Activated CD8-positive, alpha-beta T cell treated with anti-CD3 and anti-CD28 coated beads for 36 hours (primary cell): ENCODE measurements at regions of chr15 and their contacts with region 1.

Region 1: DNA sequence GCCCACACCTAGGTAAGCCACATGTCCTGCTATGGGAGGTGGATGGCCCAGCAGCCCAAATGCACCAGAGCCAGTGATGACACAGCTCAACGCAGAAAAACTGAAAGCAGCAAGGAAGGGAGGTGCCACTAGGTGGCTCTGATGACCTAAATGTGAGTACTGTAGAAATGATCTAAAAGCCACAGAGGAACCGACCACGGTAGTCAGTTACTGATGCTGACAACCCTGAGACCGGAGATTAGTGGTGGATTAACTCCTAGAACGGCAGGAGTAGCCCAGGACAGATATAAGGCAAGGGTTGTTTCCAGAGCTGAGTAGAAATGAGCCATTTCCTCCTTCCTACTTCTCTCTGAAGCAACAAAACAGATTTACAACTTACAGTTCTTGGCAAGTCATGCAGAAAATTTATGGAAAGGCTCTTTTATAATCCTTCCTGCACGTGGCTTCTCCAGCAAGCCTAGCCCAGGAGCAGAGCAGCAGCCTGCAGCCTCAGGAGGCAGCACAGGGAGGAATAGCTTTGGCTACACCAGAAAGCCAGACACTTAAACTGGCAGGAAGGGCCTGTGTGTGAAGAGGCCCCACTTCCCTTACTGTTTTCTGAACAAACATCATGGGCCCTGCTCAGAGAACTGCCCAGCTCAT is 13.1 kb downstream of the FBXL22 start:
- DNase-seq: peak; percentile 93
- ATAC-seq: peak; percentile 87
- H3K4me3 Mint-ChIP-seq: no peak overlapping the region
- H3K27ac Mint-ChIP-seq: peak overlapping the region; percentile 91
- H3K4me1 Mint-ChIP-seq: peaks cover 32% of the 10 kb centered on the region
- H3K27me3 Mint-ChIP-seq: no peaks in the 10 kb centered on the region
- CTCF ChIP-seq: peak; percentile 81

Region 2: DNA sequence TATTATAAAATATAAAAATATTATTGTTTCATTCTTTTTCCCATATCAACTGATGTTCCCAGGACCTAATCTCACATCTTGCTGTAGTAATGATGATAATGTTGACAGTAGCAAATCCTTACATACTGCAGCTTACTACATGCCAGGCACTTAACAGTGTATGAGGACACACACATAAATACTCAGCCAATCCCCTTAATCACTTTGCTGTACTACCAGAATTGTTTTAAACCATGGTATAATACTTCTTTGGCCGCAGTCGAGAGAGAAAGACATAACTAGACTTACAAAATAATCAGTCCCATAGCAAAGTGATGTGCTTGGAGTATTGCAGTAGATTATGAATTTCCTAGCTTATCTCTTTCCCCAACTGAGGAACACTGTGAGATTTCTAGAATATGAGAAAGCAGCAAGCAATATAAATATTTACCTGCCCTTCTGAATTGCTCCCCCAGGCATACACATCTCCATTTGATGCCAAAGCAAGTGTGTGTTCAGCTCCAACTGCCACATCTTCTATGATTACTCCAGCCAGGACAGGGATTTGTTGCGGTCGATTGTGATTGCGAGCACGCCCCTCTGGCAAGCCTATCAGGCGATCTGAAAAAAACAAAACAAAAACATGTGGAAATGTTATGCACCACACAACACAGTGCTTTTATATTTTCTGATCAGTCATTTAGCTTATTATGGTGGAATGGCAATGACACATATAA is 19.9 kb after region 1 on chr15:
- CTCF ChIA-PET with region 1: interaction called, 18 read pairs
- POLR2A ChIA-PET with region 1: interaction called, 4 read pairs
- intact Hi-C with region 1: no loop called
- DNase-seq: no peak
- ATAC-seq: no peak
- H3K4me3 Mint-ChIP-seq: no peak overlapping the region
- H3K27ac Mint-ChIP-seq: peak overlapping the region; percentile 57
- H3K4me1 Mint-ChIP-seq: peaks cover 12% of the 10 kb centered on the region
- H3K27me3 Mint-ChIP-seq: no peaks in the 10 kb centered on the region
- CTCF ChIP-seq: no peak

Region 3: DNA sequence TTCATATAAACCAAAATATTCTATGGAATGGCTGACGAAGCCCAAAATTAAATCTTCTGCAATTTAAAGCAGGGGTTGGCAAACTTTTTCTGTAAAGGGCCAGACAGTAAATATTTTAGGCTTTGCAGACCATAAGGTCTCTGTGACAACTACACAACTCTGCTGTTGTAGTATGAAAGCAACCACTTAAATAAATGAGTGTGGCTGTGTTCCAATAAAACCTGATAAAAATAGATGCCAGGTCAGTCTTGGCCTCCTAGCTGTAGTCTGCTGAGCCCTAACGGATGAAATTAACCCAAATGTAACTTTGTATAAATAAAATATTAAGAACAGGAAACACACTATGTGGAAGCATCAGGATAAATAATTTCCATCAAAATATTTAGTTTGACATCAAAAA is 91.0 kb after region 1 on chr15:
- CTCF ChIA-PET with region 1: interaction called, 11 read pairs
- POLR2A ChIA-PET with region 1: no interaction called
- intact Hi-C with region 1: no loop called
- DNase-seq: no peak
- ATAC-seq: no peak
- H3K4me3 Mint-ChIP-seq: no peak overlapping the region
- H3K27ac Mint-ChIP-seq: no peak overlapping the region
- H3K4me1 Mint-ChIP-seq: peaks cover 5% of the 10 kb centered on the region
- H3K27me3 Mint-ChIP-seq: no peaks in the 10 kb centered on the region
- CTCF ChIP-seq: no peak

Region 4: GRCh38 chr15:63942486-63943365 is 332.4 kb after region 1 on chr15:
- CTCF ChIA-PET with region 1: no interaction called
- POLR2A ChIA-PET with region 1: no interaction called
- intact Hi-C with region 1: no loop called
- DNase-seq: no peak
- ATAC-seq: no peak
- H3K4me3 Mint-ChIP-seq: no peak overlapping the region
- H3K27ac Mint-ChIP-seq: no peak overlapping the region
- H3K4me1 Mint-ChIP-seq: peaks cover 33% of the 10 kb centered on the region
- H3K27me3 Mint-ChIP-seq: no peaks in the 10 kb centered on the region
- CTCF ChIP-seq: no peak

Region 5: DNA sequence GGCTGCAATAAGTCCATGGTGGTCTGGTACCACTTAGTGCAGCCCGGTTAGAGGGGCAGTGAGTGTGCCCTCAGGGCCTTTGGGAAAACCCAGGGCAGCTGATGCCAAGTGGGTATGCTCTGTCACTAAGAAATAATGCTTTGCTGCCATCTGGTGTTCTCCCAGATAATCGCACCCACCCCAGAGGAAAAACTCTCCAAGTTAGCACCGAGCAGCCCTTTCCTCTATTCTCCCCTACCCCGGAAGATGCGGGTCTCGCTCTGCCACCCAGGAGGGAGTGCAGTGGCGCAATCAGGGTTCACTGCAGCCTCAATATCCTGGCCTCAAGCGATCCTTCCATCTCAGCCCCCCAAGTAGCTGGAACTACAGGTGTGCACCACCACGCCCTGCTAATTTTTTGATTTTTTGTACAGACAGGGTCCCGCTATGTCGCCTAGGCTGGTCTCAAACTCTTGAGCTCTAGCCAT is 457.3 kb after region 1 on chr15:
- CTCF ChIA-PET with region 1: interaction called, 66 read pairs
- POLR2A ChIA-PET with region 1: no interaction called
- intact Hi-C with region 1: loop called (anchors 10 kb)
- DNase-seq: peak; percentile 80
- ATAC-seq: peak; percentile 89
- H3K4me3 Mint-ChIP-seq: no peak overlapping the region
- H3K27ac Mint-ChIP-seq: no peak overlapping the region
- H3K4me1 Mint-ChIP-seq: peaks cover 4% of the 10 kb centered on the region
- H3K27me3 Mint-ChIP-seq: no peaks in the 10 kb centered on the region
- CTCF ChIP-seq: peak; percentile 81